Activated CD4-positive, alpha-beta memory T cell treated with anti-CD3 and anti-CD28 coated beads for 36 hours (primary cell): ENCODE measurements at regions of chr11 and their contacts with region 1.

Region 1: DNA sequence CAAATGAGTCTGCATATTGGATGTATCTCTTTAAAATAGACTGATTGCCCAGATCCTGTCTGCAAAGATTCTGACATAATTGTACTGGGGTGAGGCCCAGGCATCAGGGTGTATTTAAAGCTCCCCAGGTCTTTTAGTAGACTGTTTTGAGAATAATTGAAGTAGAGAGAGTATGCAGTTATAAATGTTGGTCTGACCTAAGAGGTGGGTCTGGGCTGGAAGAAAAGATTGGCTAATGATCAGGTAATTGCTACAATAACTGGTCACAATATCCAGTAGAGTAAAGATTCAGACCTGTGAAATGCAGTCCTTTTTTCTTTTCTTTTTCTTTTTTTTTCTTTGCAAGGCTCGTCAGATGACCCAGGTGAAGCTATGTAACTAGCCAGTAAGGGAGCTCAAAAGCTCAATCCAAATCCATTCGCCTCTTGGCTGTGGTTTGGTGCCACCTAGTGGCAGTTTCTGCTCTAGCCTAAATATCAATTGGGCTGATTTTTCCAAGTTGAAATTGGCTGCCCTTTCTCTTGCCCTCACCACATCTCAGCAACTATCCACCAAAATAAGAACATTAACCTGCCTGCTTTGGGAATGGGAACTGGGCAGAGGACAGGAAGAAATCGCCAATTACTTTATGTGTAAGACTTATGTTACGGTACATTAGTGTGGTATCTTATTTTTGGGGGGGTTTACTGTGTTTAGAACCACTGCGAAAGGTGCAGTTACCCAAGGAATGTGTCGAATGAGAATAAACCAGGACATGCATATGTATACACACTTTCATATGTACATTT is 45.9 kb downstream of the ZNF143 start:
- DNase-seq: peak; percentile 82
- H3K4me3 Mint-ChIP-seq: no peak overlapping the region
- H3K27ac Mint-ChIP-seq: no peak overlapping the region
- H3K4me1 Mint-ChIP-seq: peaks cover 11% of the 10 kb centered on the region
- H3K27me3 Mint-ChIP-seq: no peaks in the 10 kb centered on the region

Region 2: GRCh38 chr11:9158898-9159391 is 347.7 kb before region 1 on chr11:
- CTCF ChIA-PET with region 1: interaction called, 15 read pairs
- POLR2A ChIA-PET with region 1: no interaction called
- intact Hi-C with region 1: no loop called
- DNase-seq: no peak
- H3K4me3 Mint-ChIP-seq: no peak overlapping the region
- H3K27ac Mint-ChIP-seq: peak overlapping the region; percentile 3
- H3K4me1 Mint-ChIP-seq: peaks cover 26% of the 10 kb centered on the region
- H3K27me3 Mint-ChIP-seq: no peaks in the 10 kb centered on the region

Region 3: GRCh38 chr11:9280655-9281301 is 225.9 kb before region 1 on chr11:
- CTCF ChIA-PET with region 1: interaction called, 9 read pairs
- POLR2A ChIA-PET with region 1: no interaction called
- intact Hi-C with region 1: loop called (anchors 2 kb)
- DNase-seq: peak; percentile 69
- H3K4me3 Mint-ChIP-seq: no peak overlapping the region
- H3K27ac Mint-ChIP-seq: no peak overlapping the region
- H3K4me1 Mint-ChIP-seq: peaks cover 13% of the 10 kb centered on the region
- H3K27me3 Mint-ChIP-seq: no peaks in the 10 kb centered on the region

Region 4: GRCh38 chr11:9479899-9480298 is 26.8 kb before region 1 on chr11:
- CTCF ChIA-PET with region 1: interaction called, 23 read pairs
- POLR2A ChIA-PET with region 1: no interaction called
- intact Hi-C with region 1: no loop called
- DNase-seq: no peak
- H3K4me3 Mint-ChIP-seq: no peak overlapping the region
- H3K27ac Mint-ChIP-seq: no peak overlapping the region
- H3K4me1 Mint-ChIP-seq: no peaks in the 10 kb centered on the region
- H3K27me3 Mint-ChIP-seq: no peaks in the 10 kb centered on the region

Region 5: GRCh38 chr11:9748361-9748970 is 241.8 kb after region 1 on chr11:
- CTCF ChIA-PET with region 1: interaction called, 10 read pairs
- POLR2A ChIA-PET with region 1: no interaction called
- intact Hi-C with region 1: no loop called
- DNase-seq: peak; percentile 79
- H3K4me3 Mint-ChIP-seq: no peak overlapping the region
- H3K27ac Mint-ChIP-seq: no peak overlapping the region
- H3K4me1 Mint-ChIP-seq: peaks cover 11% of the 10 kb centered on the region
- H3K27me3 Mint-ChIP-seq: no peaks in the 10 kb centered on the region